Mammary epithelial cell (primary cell): ENCODE measurements at regions of chr11 and their contacts with region 1.

Region 1: GRCh38 chr11:3905080-3905953 is 49.9 kb downstream of the STIM1 start:
- DNase-seq: peak; percentile 97
- H3K4me3 ChIP-seq: peak overlapping the region in 1 of 3 experiments; percentile 25
- H3K27ac ChIP-seq: peak overlapping the region; percentile 97
- H3K4me1 ChIP-seq: peaks cover 57% of the 10 kb centered on the region
- H3K27me3 ChIP-seq: no peaks in the 10 kb centered on the region
- CTCF ChIP-seq: no peak

Region 2: DNA sequence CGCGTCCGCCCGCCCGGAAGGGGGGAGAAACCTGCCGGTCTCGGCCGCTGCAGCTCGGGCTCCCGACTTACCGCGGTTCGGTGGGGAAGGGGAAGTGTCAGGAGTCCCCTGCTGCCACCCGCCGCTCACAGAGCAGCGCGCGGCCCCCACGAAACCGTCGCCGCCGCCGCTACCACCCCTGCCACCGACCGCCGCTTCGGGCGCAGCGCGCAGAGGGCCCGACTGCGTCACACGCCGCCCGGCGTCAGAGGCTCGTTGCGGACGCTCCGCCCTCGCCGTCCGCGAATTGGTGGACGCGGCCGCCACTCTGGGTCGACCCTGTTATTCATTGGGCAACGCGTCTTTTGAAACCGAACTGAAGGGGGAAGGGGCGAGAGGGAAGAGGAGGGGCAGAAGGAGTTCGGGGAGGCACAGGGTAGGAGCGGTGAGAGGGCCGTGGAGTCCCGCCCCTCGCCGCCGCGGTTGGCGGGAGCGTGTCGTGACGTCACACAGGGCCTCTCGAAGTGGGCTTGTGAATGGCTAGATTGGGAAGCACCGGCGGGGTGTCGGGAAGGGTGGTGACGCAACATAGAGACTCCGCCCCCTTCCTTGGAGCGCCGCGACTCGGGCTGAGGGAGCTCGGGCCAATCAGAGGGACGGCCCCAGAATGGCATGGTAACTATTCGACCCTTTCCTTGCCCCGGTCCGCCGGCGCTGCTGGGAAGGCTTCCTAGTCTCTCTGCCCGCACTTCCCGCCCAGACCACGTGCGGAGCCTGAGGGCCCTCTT is 107.8 kb before region 1 on chr11 and contains the start of gene NUP98:
- CTCF ChIA-PET with region 1: no interaction called
- dilution Hi-C with region 1: loop called (anchors 5 kb)
- in situ Hi-C with region 1: no loop called
- intact Hi-C with region 1: no loop called
- DNase-seq: peak; percentile 100
- H3K4me3 ChIP-seq: peak within 1 kb of the TSS; percentile 75 to 92 (median 85)
- H3K27ac ChIP-seq: peak within 1 kb of the TSS; percentile 95
- H3K4me1 ChIP-seq: peaks cover 8% of the 10 kb centered on the region
- H3K27me3 ChIP-seq: no peaks in the 10 kb centered on the region
- CTCF ChIP-seq: no peak
- total RNA-seq, gene NUP98: 73.6 to 108 TPM

Region 3: GRCh38 chr11:3854977-3855807 is 50.1 kb before region 1 on chr11 and contains the start of gene STIM1:
- CTCF ChIA-PET with region 1: no interaction called
- dilution Hi-C with region 1: no loop called
- in situ Hi-C with region 1: loop called in 1 of 2 experiments (anchors 5 kb)
- intact Hi-C with region 1: loop called (anchors 1 kb)
- DNase-seq: peak; percentile 87
- H3K4me3 ChIP-seq: peak within 1 kb of the TSS; percentile 69 to 90 (median 87)
- H3K27ac ChIP-seq: peak within 1 kb of the TSS; percentile 79
- H3K4me1 ChIP-seq: peaks cover 30% of the 10 kb centered on the region
- H3K27me3 ChIP-seq: no peaks in the 10 kb centered on the region
- CTCF ChIP-seq: peak; percentile 81 to 92
- total RNA-seq, gene STIM1: 57.0 to 74.0 TPM

Region 4: DNA sequence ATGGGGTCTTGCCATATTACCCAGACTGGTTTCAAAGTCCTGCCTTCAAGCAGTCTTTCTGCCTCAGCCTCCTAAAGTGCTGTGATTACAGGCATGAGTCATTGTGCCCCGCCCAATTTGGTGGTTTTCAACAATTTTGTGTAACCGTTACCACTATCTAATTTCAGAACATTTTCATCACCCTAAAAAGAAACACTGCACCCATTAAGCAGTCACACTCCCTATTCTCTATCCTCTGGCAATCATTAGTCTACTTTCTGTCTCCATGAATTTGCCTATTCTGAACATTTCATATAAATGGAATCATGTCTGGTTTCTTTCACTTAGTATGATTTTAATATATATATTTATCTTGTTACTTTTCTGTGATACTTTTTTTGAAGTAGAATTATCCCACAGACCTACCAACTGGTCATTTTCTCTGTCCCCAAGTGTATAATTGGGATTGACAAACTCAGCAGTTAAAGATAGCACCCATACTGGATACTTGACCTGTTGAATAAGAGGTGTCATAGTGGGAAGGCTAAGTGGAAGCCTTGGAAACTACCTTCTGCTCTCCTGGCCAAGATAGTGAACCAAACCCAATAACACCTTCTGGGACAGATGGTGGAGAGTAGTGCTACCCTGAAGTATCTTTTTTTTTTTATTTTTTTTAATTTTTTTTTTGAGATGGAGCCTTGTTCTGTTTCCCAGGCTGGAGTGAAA is 15.0 kb after region 1 on chr11:
- CTCF ChIA-PET with region 1: no interaction called
- dilution Hi-C with region 1: no loop called
- in situ Hi-C with region 1: no loop called
- intact Hi-C with region 1: loop called (anchors 1 kb)
- DNase-seq: peak; percentile 86
- H3K4me3 ChIP-seq: no peak overlapping the region
- H3K27ac ChIP-seq: peak overlapping the region; percentile 76
- H3K4me1 ChIP-seq: peaks cover 23% of the 10 kb centered on the region
- H3K27me3 ChIP-seq: no peaks in the 10 kb centered on the region
- CTCF ChIP-seq: no peak

Region 5: DNA sequence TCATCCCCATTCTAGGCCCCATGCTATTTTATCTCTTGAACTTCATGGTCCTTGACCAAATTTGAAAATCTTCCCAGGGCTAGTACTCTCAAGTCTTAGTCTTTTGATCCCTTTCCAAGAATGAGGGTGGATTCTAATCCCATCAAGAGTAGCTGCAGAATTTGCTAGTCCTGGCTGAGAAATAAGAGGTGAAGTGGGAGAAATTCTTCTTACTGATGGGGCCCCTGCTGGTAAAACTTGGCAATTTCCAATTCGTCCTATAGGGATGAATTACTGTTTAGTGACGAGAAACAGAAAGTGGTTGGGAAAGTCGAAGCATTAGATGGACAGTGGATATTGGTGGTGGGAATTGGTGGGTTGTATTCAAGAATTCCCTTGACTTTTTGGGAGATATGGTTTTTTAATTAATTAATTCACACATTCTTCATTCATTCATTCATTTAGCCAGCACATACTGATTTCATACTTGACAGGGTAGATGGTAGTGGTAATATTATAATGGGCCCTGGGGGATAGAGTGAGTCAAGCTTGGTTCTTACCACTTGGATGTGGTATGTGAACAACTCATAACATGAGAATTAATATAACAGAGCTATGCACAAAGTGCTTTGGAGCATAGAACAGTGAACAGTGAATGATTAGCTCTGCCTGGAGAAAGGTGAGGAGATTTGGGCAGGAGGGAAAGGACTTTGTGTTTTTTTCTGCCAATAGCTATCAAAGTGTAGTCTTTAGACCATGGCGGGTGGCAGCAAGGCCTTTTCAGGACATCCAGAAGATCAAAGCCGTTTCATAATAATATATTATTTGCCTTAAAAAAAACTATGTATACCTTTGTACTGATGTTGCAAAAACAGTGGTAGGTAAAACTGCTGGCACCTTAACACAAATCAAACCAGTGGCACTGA is 54.0 kb after region 1 on chr11:
- CTCF ChIA-PET with region 1: no interaction called
- dilution Hi-C with region 1: loop called (anchors 5 kb)
- in situ Hi-C with region 1: no loop called
- intact Hi-C with region 1: loop called (anchors 2 kb)
- DNase-seq: peak; percentile 79
- H3K4me3 ChIP-seq: no peak overlapping the region
- H3K27ac ChIP-seq: peak overlapping the region; percentile 54
- H3K4me1 ChIP-seq: peaks cover 42% of the 10 kb centered on the region
- H3K27me3 ChIP-seq: no peaks in the 10 kb centered on the region
- CTCF ChIP-seq: peak; percentile 19 to 24

Region 6: GRCh38 chr11:3980961-3981633 is 75.8 kb after region 1 on chr11:
- CTCF ChIA-PET with region 1: no interaction called
- dilution Hi-C with region 1: no loop called
- in situ Hi-C with region 1: no loop called
- intact Hi-C with region 1: no loop called
- DNase-seq: no peak
- H3K4me3 ChIP-seq: no peak overlapping the region
- H3K27ac ChIP-seq: no peak overlapping the region
- H3K4me1 ChIP-seq: peaks cover 5% of the 10 kb centered on the region
- H3K27me3 ChIP-seq: no peaks in the 10 kb centered on the region
- CTCF ChIP-seq: no peak